ENCODE measurements at regions of chr2 and their contacts with region 1.

Region 1: GRCh38 chr2:201071479-201072200 is at the starts of genes HYCC2 and NDUFB3:
- DNase-seq: peak; percentile 75 to 92 (median 90)
- H3K4me3 ChIP-seq: peak within 1 kb of the TSS; percentile 58 to 100 (median 95)
- H3K27ac ChIP-seq: peak within 1 kb of the TSS; percentile 69 to 98 (median 95)
- H3K27me3 ChIP-seq: no peaks in the 10 kb centered on the region
- CTCF ChIP-seq: peak in 54 of 56 donors; percentile 5 to 76 (median 46)
- total RNA-seq, gene HYCC2: 40.5 to 110 (median 79.7) TPM
- total RNA-seq, gene NDUFB3: 41.9 to 129 (median 85.4) TPM

Region 2: GRCh38 chr2:200888704-200889625 is 182.7 kb before region 1 on chr2 and contains the starts of genes NIF3L1 and PPIL3:
- intact Hi-C with region 1: loop called (anchors 5 kb)
- DNase-seq: peak; percentile 92 to 97 (median 96)
- H3K4me3 ChIP-seq: peak within 1 kb of the TSS; percentile 61 to 98 (median 88)
- H3K27ac ChIP-seq: peak within 1 kb of the TSS; percentile 72 to 97 (median 91)
- H3K27me3 ChIP-seq: no peaks in the 10 kb centered on the region
- CTCF ChIP-seq: peak in 24 of 56 donors; percentile 7 to 56 (median 23)
- total RNA-seq, gene NIF3L1: 16.7 to 46.3 (median 29.7) TPM
- total RNA-seq, gene PPIL3: 16.4 to 56.9 (median 33.7) TPM

Region 3: DNA sequence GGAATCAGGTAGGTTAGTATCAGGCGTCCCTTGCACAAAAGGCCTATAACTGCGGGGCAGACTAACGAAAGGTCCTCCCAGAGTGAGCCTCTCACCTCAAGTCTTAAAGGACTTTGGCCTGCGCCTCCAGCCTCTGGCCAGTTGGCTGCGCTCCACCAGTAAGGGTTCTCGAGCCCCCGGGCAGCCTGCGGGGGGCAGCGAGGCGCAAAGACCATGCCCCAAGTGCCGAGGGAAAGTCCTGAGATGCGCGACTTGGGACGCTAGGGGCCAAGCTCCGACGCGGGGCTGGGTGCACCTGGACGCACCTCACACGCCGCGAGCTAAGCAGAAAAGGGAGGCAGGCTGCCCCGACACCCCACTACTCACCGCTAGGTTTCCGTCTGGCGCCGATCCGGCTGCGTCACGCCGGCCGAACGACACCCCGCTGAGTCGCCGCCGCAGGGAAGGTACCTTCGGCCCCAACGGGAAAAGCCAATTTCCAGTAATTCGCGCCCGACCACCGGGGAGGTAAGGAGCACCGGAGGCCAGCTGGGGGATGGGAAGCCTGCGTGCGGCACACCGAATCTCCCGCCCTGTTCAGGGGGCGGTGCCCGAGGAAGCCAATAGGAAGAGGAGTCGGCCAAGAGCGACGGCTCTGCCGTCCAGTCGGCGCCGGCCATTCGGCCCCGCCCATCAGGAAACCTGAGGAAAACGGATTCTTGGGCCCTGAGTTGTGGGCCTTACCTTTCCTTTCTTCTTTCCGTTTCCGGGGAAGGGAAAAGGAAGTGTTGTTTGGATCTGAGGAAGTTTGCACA is 108.3 kb before region 1 on chr2 and contains the start of gene ORC2:
- intact Hi-C with region 1: loop called (anchors 1 to 2 kb)
- DNase-seq: peak; percentile 81 to 97 (median 94)
- H3K4me3 ChIP-seq: peak within 1 kb of the TSS; percentile 53 to 100 (median 94)
- H3K27ac ChIP-seq: peak within 1 kb of the TSS in 57 of 59 donors; percentile 27 to 90 (median 80)
- H3K27me3 ChIP-seq: no peaks in the 10 kb centered on the region
- CTCF ChIP-seq: peak in 49 of 56 donors; percentile 5 to 61 (median 39)
- total RNA-seq, gene ORC2: 26.1 to 54.8 (median 38.1) TPM

Region 4: DNA sequence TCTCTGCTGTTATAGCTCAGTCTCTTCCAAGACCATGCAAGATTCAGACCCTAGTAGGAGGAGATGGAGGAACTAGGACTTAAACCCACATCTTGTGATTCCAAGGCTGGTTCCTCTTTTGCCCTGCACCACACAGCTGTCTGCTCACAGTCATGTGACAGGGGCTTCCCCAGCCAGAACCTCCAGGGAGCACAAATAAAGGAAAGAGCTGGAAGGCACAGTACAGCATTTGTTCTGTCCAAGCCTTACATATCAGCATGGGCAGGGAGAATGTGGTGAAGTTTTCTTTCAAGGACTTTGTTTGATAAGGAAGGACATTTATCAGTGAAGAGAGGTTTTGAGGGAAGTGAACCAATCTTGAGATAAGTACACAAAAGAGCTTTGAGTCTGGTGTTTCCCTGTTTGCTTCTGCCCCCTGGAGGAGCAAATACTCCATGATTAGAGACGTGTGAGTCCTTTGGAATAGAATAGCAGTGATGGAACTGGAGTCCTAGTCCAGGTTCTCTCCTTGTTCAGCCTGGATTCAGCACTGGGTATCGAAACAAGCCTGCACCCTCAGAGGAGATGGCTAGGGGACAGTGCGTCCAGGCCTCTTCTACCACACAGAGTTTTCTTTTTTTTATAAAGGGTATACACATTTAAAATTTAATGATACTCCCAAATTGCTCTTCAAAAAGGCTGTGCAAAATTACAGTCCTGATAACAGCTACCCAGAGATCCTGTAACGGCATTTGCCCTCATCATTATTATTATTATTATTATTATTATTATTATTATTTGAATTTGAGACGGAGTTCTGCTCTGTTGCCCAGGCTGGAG is 86.7 kb after region 1 on chr2:
- intact Hi-C with region 1: loop called (anchors 1 to 5 kb)
- DNase-seq: peak in 8 of 10 donors; percentile 29 to 85 (median 62)
- H3K4me3 ChIP-seq: peak overlapping the region in 14 of 59 donors; percentile 0 to 22 (median 12)
- H3K27ac ChIP-seq: peak overlapping the region; percentile 14 to 95 (median 85)
- H3K27me3 ChIP-seq: no peaks in the 10 kb centered on the region
- CTCF ChIP-seq: peak; percentile 35 to 88 (median 76)